ENCODE measurements at regions of chr6 and their contacts with region 1.

Region 1: GRCh38 chr6:34284563-34285447 is 36.0 kb upstream of the SMIM29 start:
- DNase-seq: peak; percentile 69 to 93 (median 82)
- ATAC-seq: peak; percentile 84
- H3K4me3 ChIP-seq: no peak overlapping the region
- H3K27ac ChIP-seq: peak overlapping the region; percentile 7
- H3K4me1 ChIP-seq: peaks cover 8 to 52% of the 10 kb centered on the region in 2 experiments; a peak in 4 of 5 replicates
- H3K27me3 ChIP-seq: no peaks in the 10 kb centered on the region
- CTCF ChIP-seq: peak in 2 of 3 experiments; percentile 13 to 18; a peak in 2 of 6 replicates
- EP300 ChIP-seq: peak; percentile 73; the same call in 1 of the 2 replicates
- POLR2A ChIP-seq: peak; percentile 27; the same call in 1 of the 2 replicates
- RAD21 ChIP-seq: peak in 1 of 2 experiments; percentile 37; a peak in 2 of 4 replicates

Region 2: DNA sequence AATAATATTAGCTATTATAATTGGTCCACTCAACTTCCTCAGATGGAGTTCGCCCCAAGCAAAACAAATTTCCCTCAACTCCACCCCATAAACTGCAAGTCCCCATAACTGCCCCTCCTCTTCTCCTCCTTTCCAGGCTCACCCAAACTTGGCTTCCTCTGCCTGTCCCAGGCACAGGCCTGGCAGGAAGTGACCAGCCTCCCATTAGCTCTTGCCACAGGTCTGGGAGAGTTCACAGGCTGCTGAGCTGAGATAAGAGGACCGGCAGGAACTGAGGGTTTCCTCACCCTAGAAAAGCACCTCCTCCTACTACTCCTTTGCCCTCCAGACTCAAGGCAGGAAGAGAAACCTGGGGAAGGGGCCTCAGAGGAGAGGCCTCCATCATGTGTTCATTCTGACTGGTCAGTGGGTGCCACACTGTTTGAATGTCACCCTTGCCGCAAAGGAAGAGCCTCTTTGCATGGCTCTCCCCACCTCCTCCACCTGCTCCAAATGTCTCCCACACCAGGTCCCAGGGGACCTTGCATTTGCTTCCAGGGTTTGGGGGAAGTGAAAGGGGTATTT is 11.5 kb before region 1 on chr6:
- CTCF ChIA-PET with region 1: no interaction called
- POLR2A ChIA-PET with region 1: interaction called, 14 read pairs
- in situ Hi-C with region 1: no loop called
- intact Hi-C with region 1: no loop called
- DNase-seq: peak; percentile 82 to 99 (median 90)
- ATAC-seq: peak; percentile 94
- H3K4me3 ChIP-seq: no peak overlapping the region
- H3K27ac ChIP-seq: peak overlapping the region; percentile 91
- H3K4me1 ChIP-seq: peaks cover 39 to 55% of the 10 kb centered on the region in 2 experiments
- H3K27me3 ChIP-seq: no peaks in the 10 kb centered on the region
- CTCF ChIP-seq: no peak
- EP300 ChIP-seq: peak; percentile 98
- POLR2A ChIP-seq: peak; percentile 60
- RAD21 ChIP-seq: peak in 1 of 2 experiments; percentile 51; a peak in 3 of 4 replicates

Region 3: GRCh38 chr6:34295721-34296120 is 10.9 kb after region 1 on chr6:
- CTCF ChIA-PET with region 1: interaction called, 3 read pairs
- POLR2A ChIA-PET with region 1: interaction called, 12 read pairs
- in situ Hi-C with region 1: no loop called
- intact Hi-C with region 1: no loop called
- DNase-seq: no peak
- ATAC-seq: peak; percentile 35; the same call in 2 of the 3 replicates
- H3K4me3 ChIP-seq: no peak overlapping the region
- H3K27ac ChIP-seq: peak overlapping the region; percentile 53; the same call in 2 of the 3 replicates
- H3K4me1 ChIP-seq: peaks cover 0 to 15% of the 10 kb centered on the region in 2 experiments; a peak in 4 of 5 replicates
- H3K27me3 ChIP-seq: no peaks in the 10 kb centered on the region
- CTCF ChIP-seq: no peak
- EP300 ChIP-seq: no peak
- POLR2A ChIP-seq: no peak
- RAD21 ChIP-seq: no peak

Region 4: DNA sequence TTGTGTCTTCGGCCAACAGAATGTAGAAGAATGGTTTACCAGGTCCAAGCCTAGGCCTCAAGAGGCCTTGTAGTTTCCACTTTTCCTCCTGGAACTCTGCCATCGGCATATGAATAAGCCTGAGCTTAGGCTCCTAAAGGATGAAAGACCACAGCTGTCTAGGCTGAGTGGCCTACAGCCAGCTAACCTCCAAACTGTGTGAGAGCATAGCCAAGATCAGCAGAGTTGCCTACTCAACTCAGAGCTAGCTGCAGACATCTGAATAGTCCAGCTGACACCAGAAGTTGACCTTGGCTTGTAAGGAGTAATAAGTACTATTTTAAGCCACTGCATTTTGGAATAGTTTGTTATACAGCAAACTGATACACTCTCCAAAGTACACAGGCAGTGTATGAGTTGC is 16.6 kb after region 1 on chr6:
- CTCF ChIA-PET with region 1: no interaction called
- POLR2A ChIA-PET with region 1: interaction called, 12 read pairs
- in situ Hi-C with region 1: no loop called
- intact Hi-C with region 1: no loop called
- DNase-seq: peak in 1 of 4 experiments; percentile 42
- ATAC-seq: peak; percentile 51
- H3K4me3 ChIP-seq: no peak overlapping the region
- H3K27ac ChIP-seq: peak overlapping the region; percentile 24; the same call in 1 of the 3 replicates
- H3K4me1 ChIP-seq: peaks cover 5 to 25% of the 10 kb centered on the region in 2 experiments
- H3K27me3 ChIP-seq: no peaks in the 10 kb centered on the region
- CTCF ChIP-seq: no peak
- EP300 ChIP-seq: no peak
- POLR2A ChIP-seq: no peak
- RAD21 ChIP-seq: no peak

Region 5: GRCh38 chr6:34324738-34325444 is 40.1 kb after region 1 on chr6:
- CTCF ChIA-PET with region 1: no interaction called
- POLR2A ChIA-PET with region 1: interaction called, 4 read pairs
- in situ Hi-C with region 1: no loop called
- intact Hi-C with region 1: loop called (anchors 2 kb)
- DNase-seq: peak in 2 of 4 experiments; percentile 54 to 87
- ATAC-seq: peak; percentile 81
- H3K4me3 ChIP-seq: no peak overlapping the region
- H3K27ac ChIP-seq: peak overlapping the region; percentile 79
- H3K4me1 ChIP-seq: peaks cover 22 to 49% of the 10 kb centered on the region in 2 experiments
- H3K27me3 ChIP-seq: no peaks in the 10 kb centered on the region
- CTCF ChIP-seq: no peak
- EP300 ChIP-seq: no peak
- POLR2A ChIP-seq: 0 out of 2 replicates have a peak, but pooled peaks have one; percentile 24
- RAD21 ChIP-seq: no peak

Region 6: GRCh38 chr6:34436803-34437643 is 152.2 kb after region 1 on chr6:
- CTCF ChIA-PET with region 1: no interaction called
- POLR2A ChIA-PET with region 1: no interaction called
- in situ Hi-C with region 1: no loop called
- intact Hi-C with region 1: no loop called
- DNase-seq: no peak
- ATAC-seq: no peak
- H3K4me3 ChIP-seq: no peak overlapping the region
- H3K27ac ChIP-seq: no peak overlapping the region
- H3K4me1 ChIP-seq: no peaks in the 10 kb centered on the region
- H3K27me3 ChIP-seq: no peaks in the 10 kb centered on the region
- CTCF ChIP-seq: no peak
- EP300 ChIP-seq: no peak
- POLR2A ChIP-seq: no peak
- RAD21 ChIP-seq: no peak

Measured in K562 (cell line).